A549 (cell line): ENCODE measurements at regions of chr12 and their contacts with region 1.

Region 1: GRCh38 chr12:53308276-53308675 is 8.8 kb downstream of the MYG1 start:
- DNase-seq: no peak
- ATAC-seq: peak in 1 of 2 experiments; percentile 11; a peak in 2 of 6 replicates
- H3K4me3 ChIP-seq: no peak overlapping the region
- H3K27ac ChIP-seq: no peak overlapping the region
- H3K4me1 ChIP-seq: 0 out of 3 replicates have a peak, but pooled peaks cover 2% of the 10 kb centered on the region
- CTCF ChIP-seq: no peak
- EP300 ChIP-seq: no peak
- POLR2A ChIP-seq: no peak
- RAD21 ChIP-seq: no peak

Region 2: DNA sequence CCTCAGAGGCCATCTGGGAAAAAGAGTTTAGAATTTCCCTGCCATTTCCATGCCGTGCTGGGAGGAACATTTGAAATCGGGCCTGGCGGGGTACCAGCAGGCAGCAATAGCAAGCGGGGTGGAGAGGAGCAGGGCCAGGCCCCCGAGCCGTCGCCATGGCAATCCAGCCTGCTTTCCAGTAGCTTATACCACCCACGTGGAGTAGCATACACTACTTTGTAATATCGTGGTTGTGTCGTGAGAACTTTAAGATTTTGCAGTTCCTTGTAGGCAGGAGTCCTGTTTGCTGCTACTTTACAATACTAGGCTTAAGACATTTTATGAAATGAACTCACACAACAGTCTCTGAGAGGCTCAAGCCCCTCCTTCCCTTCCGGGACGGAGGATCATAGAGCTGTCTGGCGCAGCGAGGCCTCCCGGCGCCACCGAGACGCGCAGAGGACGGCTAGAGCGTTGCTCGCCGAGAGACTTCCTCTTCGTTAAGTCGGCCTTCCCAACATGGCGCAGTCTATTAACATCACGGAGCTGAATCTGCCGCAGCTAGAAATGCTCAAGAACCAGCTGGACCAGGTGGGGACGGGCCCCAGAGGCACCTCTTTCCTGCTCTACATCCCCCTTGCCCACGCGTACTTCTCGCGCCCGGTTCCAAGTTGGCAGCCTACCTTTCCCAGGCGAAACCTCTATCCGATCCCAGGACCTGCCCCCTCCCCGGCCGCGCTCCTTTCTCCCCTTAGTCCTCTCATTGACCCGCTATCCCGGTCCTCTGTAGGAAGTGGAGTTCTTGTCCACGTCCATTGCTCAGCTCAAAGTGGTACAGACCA is 13.0 kb before region 1 on chr12 and contains the start of gene PFDN5:
- CTCF ChIA-PET with region 1: interaction called, 4 read pairs
- POLR2A ChIA-PET with region 1: interaction called, 12 read pairs
- DNase-seq: peak; percentile 88 to 96
- ATAC-seq: peak; percentile 83 to 88
- H3K4me3 ChIP-seq: peak within 1 kb of the TSS; percentile 75
- H3K27ac ChIP-seq: peak within 1 kb of the TSS; percentile 85 to 92
- H3K4me1 ChIP-seq: peaks cover 34% of the 10 kb centered on the region
- CTCF ChIP-seq: no peak
- EP300 ChIP-seq: no peak
- POLR2A ChIP-seq: peak; percentile 79
- RAD21 ChIP-seq: no peak
- polyA plus RNA-seq, gene PFDN5: 729 and 848 TPM in 2 replicates

Region 3: DNA sequence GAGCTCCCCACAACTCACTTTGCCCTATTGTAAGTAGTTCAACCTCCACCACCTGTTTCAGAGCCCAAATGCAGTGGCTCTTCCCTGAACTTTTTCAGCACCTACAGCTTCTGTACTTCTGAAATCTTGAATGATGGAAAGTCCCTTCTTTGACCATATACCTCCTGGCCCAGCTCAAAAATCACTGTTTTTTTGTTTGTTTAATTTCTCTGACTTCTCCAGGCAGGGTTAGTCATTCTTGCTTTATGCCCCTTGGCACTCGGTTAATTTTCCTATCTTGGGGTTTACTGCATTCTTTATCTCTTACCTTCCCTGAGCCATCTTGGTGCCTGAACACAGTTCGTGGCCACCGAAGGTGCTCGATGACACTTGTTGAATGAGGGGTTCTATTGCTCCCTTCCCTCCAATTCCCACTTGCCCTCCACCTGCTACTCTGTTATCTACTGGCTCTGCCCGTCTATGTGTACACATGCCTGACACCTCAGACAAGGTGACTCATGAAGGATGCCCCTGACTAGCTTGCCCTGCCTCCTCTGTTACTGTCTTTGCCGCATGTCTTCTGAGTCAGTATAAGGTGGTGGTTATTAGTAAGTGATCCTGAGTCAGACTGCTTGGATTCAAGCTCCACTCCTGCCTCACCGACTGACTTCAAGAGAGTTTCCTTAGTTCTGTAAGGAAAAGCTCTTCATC is 119.8 kb after region 1 on chr12:
- CTCF ChIA-PET with region 1: no interaction called
- POLR2A ChIA-PET with region 1: no interaction called
- DNase-seq: peak; percentile 89 to 91
- ATAC-seq: peak; percentile 94 to 96
- H3K4me3 ChIP-seq: no peak overlapping the region
- H3K27ac ChIP-seq: peak overlapping the region; percentile 71 to 85
- H3K4me1 ChIP-seq: peaks cover 45% of the 10 kb centered on the region
- CTCF ChIP-seq: no peak
- EP300 ChIP-seq: no peak
- POLR2A ChIP-seq: no peak
- RAD21 ChIP-seq: 0 out of 5 replicates have a peak, but pooled peaks of 1 of the 2 experiments have one; percentile 12